CD14-positive monocyte (primary cell): ENCODE measurements at regions of chr14 and their contacts with region 1.

Region 1: DNA sequence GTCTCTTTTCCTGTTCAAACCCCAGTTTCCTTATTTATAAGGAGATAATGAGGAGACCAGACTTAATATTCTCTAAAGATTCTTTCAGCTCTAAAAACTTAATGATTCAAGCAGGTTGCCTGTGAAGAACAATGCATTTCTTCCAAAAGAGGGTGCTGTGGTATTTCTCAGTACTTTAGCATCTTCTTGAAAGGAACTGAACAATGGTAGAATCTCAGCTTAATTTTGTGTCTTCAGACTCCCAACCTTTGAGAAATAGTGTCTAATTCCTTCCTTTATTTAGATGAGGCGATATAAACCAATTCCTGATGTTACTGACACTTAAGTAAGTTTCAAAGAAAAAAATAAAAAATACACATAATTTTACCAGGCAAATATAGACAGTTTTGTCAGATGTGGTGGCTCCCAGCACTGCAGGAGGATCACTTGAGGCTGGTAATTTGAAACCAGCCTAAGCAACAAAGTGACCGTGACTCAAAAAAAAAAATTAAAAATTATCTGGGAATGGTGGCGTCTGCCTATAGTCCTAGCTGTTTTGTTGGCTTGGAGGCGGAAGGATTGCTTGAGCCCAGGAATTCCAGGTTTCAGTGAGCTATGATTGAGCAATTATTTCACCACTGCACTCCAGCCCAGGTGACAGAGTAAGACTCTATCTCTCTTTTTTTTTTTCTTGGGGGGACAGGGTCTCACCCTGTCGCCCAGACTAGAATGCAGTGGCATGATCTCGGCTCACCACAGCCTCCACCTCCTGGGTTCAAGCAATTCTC is 76.9 kb upstream of the PSMA6 start:
- DNase-seq: peak in 2 of 3 donors; percentile 14 to 23
- H3K4me3 ChIP-seq: no peak overlapping the region
- H3K4me3 Mint-ChIP-seq: no peak overlapping the region
- H3K27ac ChIP-seq: no peak overlapping the region
- H3K27ac Mint-ChIP-seq: no peak overlapping the region
- H3K4me1 ChIP-seq: no peaks in the 10 kb centered on the region
- H3K4me1 Mint-ChIP-seq: no peaks in the 10 kb centered on the region
- H3K27me3 ChIP-seq: no peaks in the 10 kb centered on the region
- H3K27me3 Mint-ChIP-seq: no peaks in the 10 kb centered on the region
- CTCF ChIP-seq: peak; percentile 21

Region 2: GRCh38 chr14:35159742-35160409 is 55.4 kb before region 1 on chr14:
- intact Hi-C with region 1: loop called in 1 of 2 experiments (anchors 10 kb)
- DNase-seq: peak in 1 of 3 donors; percentile 16
- H3K4me3 ChIP-seq: no peak overlapping the region
- H3K4me3 Mint-ChIP-seq: no peak overlapping the region
- H3K27ac ChIP-seq: no peak overlapping the region
- H3K27ac Mint-ChIP-seq: no peak overlapping the region
- H3K4me1 ChIP-seq: peaks cover 5 to 8% of the 10 kb centered on the region in 2 donors
- H3K4me1 Mint-ChIP-seq: peaks cover 7% of the 10 kb centered on the region
- H3K27me3 ChIP-seq: no peaks in the 10 kb centered on the region
- H3K27me3 Mint-ChIP-seq: no peaks in the 10 kb centered on the region
- CTCF ChIP-seq: no peak

Region 3: DNA sequence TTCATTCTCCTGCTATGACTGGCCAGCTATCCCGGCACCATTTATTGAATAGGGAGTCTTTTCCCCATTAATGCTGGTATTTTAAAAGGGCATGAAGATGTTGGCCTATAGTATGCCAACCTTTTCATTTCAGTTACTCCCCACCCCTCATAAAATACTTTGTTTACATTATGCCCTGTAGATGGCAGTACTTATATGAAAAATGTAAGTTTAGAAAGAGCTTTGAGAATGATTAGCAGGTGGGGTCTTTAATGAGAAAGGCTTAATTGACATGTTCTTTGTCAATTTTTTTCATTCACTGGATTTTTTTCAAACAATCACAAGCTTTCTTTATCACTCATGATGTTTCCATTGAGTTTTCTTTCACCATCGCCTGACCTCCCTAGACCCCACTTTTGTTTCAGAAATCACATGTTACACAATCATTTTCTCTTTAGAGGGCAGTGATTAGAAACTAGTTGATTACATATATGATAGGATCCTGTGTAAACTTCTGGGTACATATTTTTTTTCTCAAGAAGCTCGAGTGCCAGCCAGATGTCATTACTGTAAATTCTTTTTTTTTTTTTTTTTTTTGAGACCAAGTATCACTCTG is 14.3 kb after region 1 on chr14:
- intact Hi-C with region 1: no loop called
- DNase-seq: peak in 1 of 3 donors; percentile 11
- H3K4me3 ChIP-seq: no peak overlapping the region
- H3K4me3 Mint-ChIP-seq: no peak overlapping the region
- H3K27ac ChIP-seq: no peak overlapping the region
- H3K27ac Mint-ChIP-seq: peak overlapping the region in 2 of 7 donors; percentile 74 to 79
- H3K4me1 ChIP-seq: peaks cover 30 to 44% of the 10 kb centered on the region in 2 donors
- H3K4me1 Mint-ChIP-seq: peaks cover 41% of the 10 kb centered on the region
- H3K27me3 ChIP-seq: no peaks in the 10 kb centered on the region
- H3K27me3 Mint-ChIP-seq: peaks cover 0 to 3% (median 0%) of the 10 kb centered on the region in 3 donors
- CTCF ChIP-seq: peak; percentile 56

Region 4: DNA sequence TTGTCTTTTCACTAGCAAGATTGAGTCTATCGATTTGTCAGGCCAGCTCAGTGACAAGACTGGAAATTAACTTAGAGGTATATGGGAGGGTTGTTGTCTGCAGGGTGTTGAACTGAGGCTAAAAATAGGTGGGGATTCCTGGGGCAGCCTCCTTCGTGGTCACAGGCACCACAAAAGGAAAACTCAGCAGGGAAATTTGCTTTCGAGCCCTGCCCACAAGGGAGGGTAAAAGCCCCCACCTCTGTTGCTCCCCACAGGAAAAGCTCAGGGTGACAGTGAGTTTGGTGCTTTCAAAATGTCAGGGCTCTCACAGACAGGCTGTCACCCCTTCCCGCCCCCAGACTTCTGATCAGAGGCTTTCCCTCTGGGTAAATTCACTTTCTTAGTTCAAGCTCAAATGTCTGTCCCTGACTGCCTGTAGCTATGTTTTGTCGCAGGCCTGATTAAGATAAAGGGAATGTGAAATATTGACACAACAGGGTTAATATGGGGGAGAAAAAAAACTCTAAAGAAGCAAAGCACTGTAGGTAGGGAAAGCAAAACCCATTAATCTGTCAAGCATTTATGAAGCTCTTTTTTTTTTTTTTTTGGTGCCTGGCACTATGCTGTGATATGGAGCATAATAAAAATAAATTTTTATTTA is 200.9 kb after region 1 on chr14:
- intact Hi-C with region 1: loop called in 1 of 2 experiments (anchors 5 kb)
- DNase-seq: no peak
- H3K4me3 ChIP-seq: no peak overlapping the region
- H3K4me3 Mint-ChIP-seq: no peak overlapping the region
- H3K27ac ChIP-seq: no peak overlapping the region
- H3K27ac Mint-ChIP-seq: no peak overlapping the region
- H3K4me1 ChIP-seq: no peaks in the 10 kb centered on the region
- H3K4me1 Mint-ChIP-seq: peaks cover 10% of the 10 kb centered on the region
- H3K27me3 ChIP-seq: no peaks in the 10 kb centered on the region
- H3K27me3 Mint-ChIP-seq: peaks cover 0 to 5% (median 4%) of the 10 kb centered on the region in 3 donors
- CTCF ChIP-seq: no peak